ENCODE measurements at regions of chr19 and their contacts with region 1.

Region 1: GRCh38 chr19:11964858-11965645 is at the start of gene ZNF763:
- DNase-seq: peak; percentile 96 to 97
- ATAC-seq: peak; percentile 97
- H3K4me3 ChIP-seq: peak within 1 kb of the TSS; percentile 23 to 68
- H3K27ac ChIP-seq: peak within 1 kb of the TSS; percentile 29 to 50
- H3K4me1 ChIP-seq: no peaks in the 10 kb centered on the region
- H3K27me3 ChIP-seq: no peaks in the 10 kb centered on the region
- total RNA-seq, gene ZNF763: 1.9 to 5.1 TPM

Region 2: DNA sequence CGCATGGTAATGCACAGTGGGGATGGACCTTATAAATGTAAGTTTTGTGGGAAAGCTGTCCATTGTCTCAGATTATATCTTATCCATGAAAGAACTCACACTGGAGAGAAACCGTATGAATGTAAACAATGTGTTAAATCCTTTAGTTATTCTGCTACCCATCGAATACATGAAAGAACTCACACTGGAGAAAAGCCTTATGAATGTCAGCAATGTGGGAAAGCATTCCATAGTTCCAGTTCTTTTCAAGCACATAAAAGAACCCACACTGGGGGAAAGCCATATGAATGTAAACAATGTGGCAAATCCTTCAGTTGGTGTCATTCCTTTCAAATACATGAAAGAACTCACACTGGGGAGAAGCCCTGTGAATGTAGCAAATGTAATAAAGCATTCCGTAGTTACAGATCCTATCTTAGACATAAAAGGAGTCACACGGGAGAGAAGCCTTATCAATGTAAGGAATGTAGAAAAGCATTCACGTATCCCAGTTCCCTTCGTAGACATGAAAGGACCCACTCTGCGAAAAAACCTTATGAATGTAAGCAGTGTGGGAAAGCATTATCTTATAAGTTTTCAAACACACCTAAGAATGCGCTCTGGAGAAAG is 13.5 kb after region 1 on chr19:
- intact Hi-C with region 1: no loop called
- DNase-seq: no peak
- ATAC-seq: no peak
- H3K4me3 ChIP-seq: no peak overlapping the region
- H3K27ac ChIP-seq: no peak overlapping the region
- H3K4me1 ChIP-seq: no peaks in the 10 kb centered on the region
- H3K27me3 ChIP-seq: no peaks in the 10 kb centered on the region

Region 3: GRCh38 chr19:12052497-12053169 is 87.6 kb after region 1 on chr19 and contains the start of gene ZNF878:
- intact Hi-C with region 1: loop called in 1 of 2 experiments (anchors 5 kb)
- DNase-seq: peak; percentile 94 to 95
- ATAC-seq: peak; percentile 98
- H3K4me3 ChIP-seq: peak within 1 kb of the TSS; percentile 49 to 55
- H3K27ac ChIP-seq: peak within 1 kb of the TSS in 1 of 2 donors; percentile 75
- H3K4me1 ChIP-seq: no peaks in the 10 kb centered on the region
- H3K27me3 ChIP-seq: no peaks in the 10 kb centered on the region
- total RNA-seq, gene ZNF878: 0.45 TPM in 1 of 2 donors, not detected in the other

Measured in aorta (tissue), 5 donors.